Activated CD8-positive, alpha-beta T cell treated with anti-CD3 and anti-CD28 coated beads, Interleukin-2, amount 10 ng/mL, durations not matched to agents 7 days and 5 days (primary cell): ENCODE measurements at regions of chr17 and their contacts with region 1.

Region 1: DNA sequence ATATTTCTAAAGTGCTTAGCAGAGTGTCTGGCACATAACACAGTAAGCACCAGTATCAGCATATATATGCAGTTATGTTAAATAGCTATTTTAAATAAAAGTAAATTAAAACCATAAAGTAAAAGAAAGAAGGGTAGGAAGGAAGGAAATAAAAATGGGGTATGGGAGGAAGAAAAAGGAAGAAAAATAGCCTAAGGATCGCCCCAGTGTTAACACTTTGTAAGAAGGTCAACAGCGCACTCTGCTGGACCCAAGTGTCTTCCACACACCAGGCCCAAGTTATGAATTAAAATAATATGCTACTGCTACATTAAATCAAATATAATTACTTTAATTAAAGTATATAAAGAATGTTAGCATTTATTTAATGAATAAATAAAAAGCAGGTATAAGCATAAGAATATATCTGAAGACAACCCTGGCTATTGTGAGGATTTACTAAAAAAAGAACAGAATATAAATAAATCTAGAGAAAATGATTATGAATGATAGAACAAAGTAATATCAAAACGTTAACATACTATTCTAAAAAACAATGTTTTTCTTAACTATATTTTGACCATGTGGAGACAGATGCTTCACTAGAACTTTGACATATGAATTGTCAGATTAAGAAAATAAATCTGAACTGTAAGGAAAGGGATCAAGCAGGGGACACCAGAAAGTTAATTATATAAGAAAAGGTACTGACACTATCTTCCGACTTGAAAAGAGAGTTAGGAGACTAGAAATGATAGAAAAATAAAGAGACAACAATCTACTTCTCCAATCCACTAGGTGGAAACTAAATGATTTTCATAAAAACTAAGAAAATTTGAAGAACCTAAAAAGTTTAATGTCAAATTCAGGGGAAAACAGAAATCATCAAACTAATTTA is 25.9 kb downstream of the BRIP1 start:
- DNase-seq: peak; percentile 64
- ATAC-seq: no peak
- H3K4me3 Mint-ChIP-seq: no peak overlapping the region
- H3K27ac Mint-ChIP-seq: no peak overlapping the region
- H3K4me1 Mint-ChIP-seq: no peaks in the 10 kb centered on the region
- H3K27me3 Mint-ChIP-seq: no peaks in the 10 kb centered on the region

Region 2: DNA sequence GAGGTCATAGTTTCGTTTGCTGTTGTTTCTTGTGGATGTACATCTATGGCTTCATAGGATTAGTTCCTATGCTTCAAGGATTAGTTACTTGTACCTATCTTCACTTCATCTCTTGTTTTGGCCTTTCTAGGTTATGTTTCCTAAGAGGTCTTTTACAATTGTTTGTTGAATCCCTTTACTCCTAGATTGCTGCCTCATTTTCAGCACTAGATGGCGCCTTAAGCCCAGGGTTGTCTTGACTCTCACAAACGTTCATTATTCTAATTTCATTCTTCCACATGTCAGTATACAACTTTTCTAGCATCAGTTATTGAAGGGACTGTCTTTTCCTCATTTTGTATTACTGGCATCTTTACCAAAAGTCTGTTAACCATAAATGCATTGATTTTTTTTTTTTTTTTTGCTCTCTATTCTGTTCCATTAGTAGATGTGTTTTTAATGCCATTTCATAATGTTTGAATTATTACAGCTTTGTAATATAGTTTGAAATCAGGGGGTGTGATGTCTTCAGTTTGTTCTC is 201.4 kb before region 1 on chr17:
- CTCF ChIA-PET with region 1: interaction called, 18 read pairs
- POLR2A ChIA-PET with region 1: no interaction called
- DNase-seq: peak; percentile 75
- ATAC-seq: no peak
- H3K4me3 Mint-ChIP-seq: no peak overlapping the region
- H3K27ac Mint-ChIP-seq: no peak overlapping the region
- H3K4me1 Mint-ChIP-seq: no peaks in the 10 kb centered on the region
- H3K27me3 Mint-ChIP-seq: peaks cover 59% of the 10 kb centered on the region

Region 3: DNA sequence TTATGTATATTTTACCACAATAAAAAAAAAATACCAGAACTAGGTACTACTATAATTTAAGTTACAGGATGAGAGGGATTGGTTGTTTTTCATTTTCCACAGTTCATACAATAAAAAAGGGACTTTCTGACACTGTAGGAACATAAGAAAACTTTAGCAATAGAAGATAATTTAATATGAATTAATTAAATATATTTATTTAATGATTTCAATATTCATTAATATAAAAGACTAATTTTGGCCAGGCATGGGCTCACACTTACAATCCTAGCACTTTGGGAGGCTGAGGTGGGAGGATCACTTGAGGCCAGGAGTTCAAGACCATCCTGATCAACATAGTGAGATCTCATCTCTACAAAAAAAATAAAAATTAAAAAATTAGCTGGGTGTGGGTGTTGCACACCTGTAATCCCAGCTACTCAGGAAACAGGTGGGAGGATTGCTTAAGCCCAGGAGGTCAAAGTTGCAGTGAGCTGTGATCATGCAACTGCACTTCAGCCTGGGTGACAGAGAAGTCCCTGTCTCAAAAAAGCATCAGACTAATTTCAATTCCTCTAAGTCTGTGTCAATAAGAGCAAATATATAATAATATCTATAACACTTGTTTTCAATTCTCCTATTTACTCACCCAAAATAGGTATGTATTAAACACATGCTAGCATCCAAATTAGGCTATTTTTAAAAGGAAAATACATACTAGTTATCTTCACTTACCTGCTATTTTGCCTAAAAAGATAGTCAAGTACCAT is 53.7 kb before region 1 on chr17:
- CTCF ChIA-PET with region 1: no interaction called
- POLR2A ChIA-PET with region 1: no interaction called
- DNase-seq: no peak
- ATAC-seq: no peak
- H3K4me3 Mint-ChIP-seq: no peak overlapping the region
- H3K27ac Mint-ChIP-seq: no peak overlapping the region
- H3K4me1 Mint-ChIP-seq: no peaks in the 10 kb centered on the region
- H3K27me3 Mint-ChIP-seq: no peaks in the 10 kb centered on the region